ENCODE measurements at regions of chr11 and their contacts with region 1.

Region 1: GRCh38 chr11:66616379-66617154 is at the start of gene RBM14:
- DNase-seq: peak; percentile 97 to 100 (median 98)
- ATAC-seq: peak; percentile 80 to 81
- H3K4me3 Mint-ChIP-seq: peak within 1 kb of the TSS; percentile 96 to 100 (median 98)
- H3K27ac Mint-ChIP-seq: peak within 1 kb of the TSS; percentile 96 to 100 (median 99)
- H3K4me1 Mint-ChIP-seq: peaks cover 24 to 56% (median 49%) of the 10 kb centered on the region in 4 donors
- H3K27me3 Mint-ChIP-seq: peaks cover 0 to 5% (median 0%) of the 10 kb centered on the region in 5 donors
- polyA plus RNA-seq, gene RBM14: 70.2 to 91.8 (median 83.3) TPM

Region 2: GRCh38 chr11:66545701-66546367 is 70.7 kb before region 1 on chr11 and contains the start of gene ZDHHC24:
- POLR2A ChIA-PET with region 1: interaction called, 16 read pairs
- DNase-seq: peak; percentile 64 to 84 (median 77)
- ATAC-seq: peak; percentile 77 to 78
- H3K4me3 Mint-ChIP-seq: peak within 1 kb of the TSS; percentile 85 to 95 (median 88)
- H3K27ac Mint-ChIP-seq: peak within 1 kb of the TSS; percentile 71 to 96 (median 92)
- H3K4me1 Mint-ChIP-seq: peaks cover 36 to 47% (median 41%) of the 10 kb centered on the region in 4 donors
- H3K27me3 Mint-ChIP-seq: no peaks in the 10 kb centered on the region
- polyA plus RNA-seq, gene ZDHHC24: 9.6 to 14.1 (median 10.5) TPM

Region 3: GRCh38 chr11:66592457-66593302 is 23.9 kb before region 1 on chr11 and contains the starts of genes CCDC87 and CCS:
- POLR2A ChIA-PET with region 1: interaction called, 72 read pairs
- DNase-seq: peak; percentile 94 to 100 (median 98)
- ATAC-seq: peak; percentile 94 to 96
- H3K4me3 Mint-ChIP-seq: peak within 1 kb of the TSS; percentile 88 to 100 (median 100)
- H3K27ac Mint-ChIP-seq: peak within 1 kb of the TSS; percentile 94 to 100 (median 100)
- H3K4me1 Mint-ChIP-seq: peaks cover 19 to 46% (median 37%) of the 10 kb centered on the region in 4 donors
- H3K27me3 Mint-ChIP-seq: no peaks in the 10 kb centered on the region
- polyA plus RNA-seq, gene CCDC87: not detected
- polyA plus RNA-seq, gene CCS: 39.2 to 53.4 (median 46.6) TPM

Region 4: DNA sequence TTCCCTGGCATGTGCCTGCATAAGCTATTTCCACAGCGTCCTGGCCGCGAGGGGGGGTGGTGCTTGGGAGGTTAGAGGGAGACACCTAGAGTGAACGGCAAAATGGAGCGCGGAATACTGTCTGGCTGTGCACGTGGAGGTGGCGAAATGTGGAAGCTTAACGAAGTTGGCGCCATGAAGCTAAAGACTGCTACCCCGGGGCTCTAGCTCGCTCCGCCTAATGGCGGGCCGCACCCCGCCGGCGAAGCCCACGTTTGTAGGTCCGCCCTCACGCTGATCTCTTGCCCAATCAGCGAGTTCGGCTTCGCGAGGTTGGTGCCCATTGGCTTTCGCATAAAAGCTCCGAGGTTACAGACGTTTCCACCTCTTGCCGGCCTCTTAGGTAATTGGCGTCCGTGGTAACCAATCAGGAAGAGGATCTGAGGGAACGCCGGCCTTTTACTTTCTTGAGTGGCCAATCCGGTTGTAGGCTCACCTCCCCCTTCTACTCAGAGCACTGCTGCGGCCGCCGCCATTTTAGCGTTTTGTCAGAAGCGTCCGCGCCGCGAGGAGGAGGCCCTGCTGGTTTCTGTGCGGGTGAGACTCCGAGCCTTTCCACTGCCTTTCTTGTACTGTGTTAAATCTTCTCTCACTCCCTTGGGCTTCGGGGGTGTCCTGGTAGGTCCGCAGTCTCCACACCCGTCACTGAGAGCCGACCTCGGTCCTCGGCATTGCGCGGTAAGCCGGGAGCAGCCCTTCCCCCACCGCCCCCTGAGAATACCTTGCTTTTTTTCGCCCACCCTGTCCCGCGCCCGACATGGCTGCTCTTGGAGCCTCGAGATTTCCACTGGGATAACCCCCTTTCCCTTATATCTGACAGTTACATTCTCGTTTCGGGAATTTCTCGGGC is 21.9 kb after region 1 on chr11 and contains the start of gene RBM4:
- POLR2A ChIA-PET with region 1: interaction called, 198 read pairs
- DNase-seq: peak; percentile 84 to 99 (median 98)
- ATAC-seq: peak; percentile 84 to 90
- H3K4me3 Mint-ChIP-seq: peak within 1 kb of the TSS; percentile 89 to 99 (median 95)
- H3K27ac Mint-ChIP-seq: peak within 1 kb of the TSS; percentile 89 to 99 (median 97)
- H3K4me1 Mint-ChIP-seq: peaks cover 36 to 73% (median 69%) of the 10 kb centered on the region in 4 donors
- H3K27me3 Mint-ChIP-seq: no peaks in the 10 kb centered on the region
- polyA plus RNA-seq, gene RBM4: 250 to 283 (median 262) TPM

Region 5: DNA sequence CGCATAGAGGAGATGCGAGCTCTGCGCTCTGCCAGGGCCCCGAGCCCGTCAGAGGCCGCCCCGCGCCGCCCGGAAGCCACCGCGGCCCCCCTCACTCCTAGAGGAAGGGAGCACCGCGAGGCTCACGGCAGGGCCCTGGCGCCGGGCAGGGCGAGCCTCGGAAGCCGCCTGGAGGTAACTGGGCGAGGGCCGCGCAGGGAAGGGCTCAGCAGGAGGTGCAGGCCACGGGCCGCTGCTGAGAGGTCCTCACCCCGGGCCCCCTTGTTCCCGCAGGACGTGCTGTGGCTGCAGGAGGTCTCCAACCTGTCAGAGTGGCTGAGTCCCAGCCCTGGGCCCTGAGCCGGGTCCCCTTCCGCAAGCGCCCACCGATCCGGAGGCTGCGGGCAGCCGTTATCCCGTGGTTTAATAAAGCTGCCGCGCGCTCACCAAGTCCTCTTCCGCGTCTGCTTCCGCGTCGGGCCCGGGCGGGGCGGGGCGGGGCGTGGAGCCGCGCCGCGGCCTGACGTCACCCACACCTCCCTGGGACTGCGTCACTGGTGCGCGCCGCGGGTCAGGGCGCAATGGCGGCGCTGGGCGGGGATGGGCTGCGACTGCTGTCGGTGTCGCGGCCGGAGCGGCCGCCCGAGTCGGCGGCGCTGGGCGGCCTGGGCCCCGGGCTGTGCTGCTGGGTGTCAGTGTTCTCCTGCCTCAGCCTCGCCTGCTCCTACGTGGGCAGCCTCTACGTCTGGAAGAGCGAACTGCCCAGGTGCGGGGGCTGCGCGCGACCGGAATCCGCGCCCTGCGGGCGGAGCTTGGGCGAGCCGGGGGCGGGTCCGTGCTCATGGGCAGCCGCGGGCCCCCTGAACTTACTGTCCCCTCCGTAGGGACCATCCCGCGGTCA is 226.6 kb after region 1 on chr11 and contains the start of gene RCE1:
- POLR2A ChIA-PET with region 1: interaction called, 10 read pairs
- DNase-seq: peak; percentile 86 to 95 (median 91)
- ATAC-seq: peak; percentile 79 to 86
- H3K4me3 Mint-ChIP-seq: peak within 1 kb of the TSS; percentile 90 to 95 (median 94)
- H3K27ac Mint-ChIP-seq: peak within 1 kb of the TSS; percentile 84 to 97 (median 96)
- H3K4me1 Mint-ChIP-seq: peaks cover 28 to 62% (median 45%) of the 10 kb centered on the region in 4 donors
- H3K27me3 Mint-ChIP-seq: no peaks in the 10 kb centered on the region
- polyA plus RNA-seq, gene RCE1: 18.1 to 27.1 (median 18.4) TPM

Measured in naive thymus-derived CD8-positive, alpha-beta T cell (primary cell).